WTC11 (cell line): ENCODE measurements at regions of chr7 and their contacts with region 1.

Region 1: DNA sequence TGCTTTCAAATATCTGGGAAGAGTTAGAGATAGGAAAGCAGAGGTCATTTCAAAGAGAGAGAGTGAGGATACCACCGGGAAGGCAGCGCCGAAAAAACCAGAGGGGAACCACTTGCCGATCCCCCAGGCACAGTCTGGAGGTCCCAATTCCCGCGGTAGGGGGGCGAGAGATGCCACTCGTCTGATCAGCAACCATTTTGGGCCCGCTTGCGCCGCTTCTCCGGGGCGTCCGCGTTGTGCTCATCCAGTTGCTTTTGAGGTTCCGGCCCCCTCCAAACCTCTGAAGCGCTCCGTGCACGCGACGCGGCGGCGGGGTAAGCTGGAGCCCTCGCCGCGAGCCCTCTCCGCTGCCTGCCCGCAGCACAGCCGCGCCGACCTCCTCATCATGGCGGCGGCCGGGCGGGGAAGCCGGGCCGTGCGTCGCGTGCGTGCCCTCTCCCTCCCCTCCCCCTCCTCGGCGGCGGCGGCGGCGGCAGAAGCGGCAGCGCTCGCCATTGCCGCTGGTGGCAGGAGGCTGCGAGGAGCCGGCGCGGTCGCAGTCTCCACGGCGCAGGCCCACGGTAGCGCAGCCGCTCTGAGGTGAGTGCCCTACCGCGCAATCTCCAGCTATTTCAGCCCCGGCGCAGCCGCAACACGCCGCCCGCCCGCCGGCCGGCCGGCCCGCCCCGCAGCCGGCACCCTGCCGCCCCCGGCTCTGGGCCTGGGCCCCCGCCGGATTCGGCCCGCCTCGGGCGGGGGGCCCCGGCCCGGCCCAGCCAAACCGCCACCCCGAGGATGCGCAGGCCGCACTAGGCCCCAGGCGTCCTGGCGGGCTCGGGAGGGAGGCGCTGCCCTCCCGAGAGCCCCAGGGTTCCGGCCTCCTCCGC is at the start of gene NRF1:
- DNase-seq: peak; percentile 84
- ATAC-seq: peak; percentile 72
- H3K4me3 Mint-ChIP-seq: peak within 1 kb of the TSS; percentile 94
- H3K27ac Mint-ChIP-seq: peak within 1 kb of the TSS; percentile 91
- H3K4me1 Mint-ChIP-seq: peaks cover 28% of the 10 kb centered on the region
- H3K27me3 Mint-ChIP-seq: no peaks in the 10 kb centered on the region
- CTCF ChIP-seq: no peak
- total RNA-seq, gene NRF1: 16.4 to 18.3 TPM (median 16.4 TPM) in 3 replicates

Region 2: GRCh38 chr7:129468087-129468486 is 143.4 kb before region 1 on chr7:
- CTCF ChIA-PET with region 1: interaction called, 12 read pairs
- POLR2A ChIA-PET with region 1: no interaction called
- DNase-seq: no peak
- ATAC-seq: no peak
- H3K4me3 Mint-ChIP-seq: no peak overlapping the region
- H3K27ac Mint-ChIP-seq: no peak overlapping the region
- H3K4me1 Mint-ChIP-seq: peaks cover 21% of the 10 kb centered on the region
- H3K27me3 Mint-ChIP-seq: no peaks in the 10 kb centered on the region
- CTCF ChIP-seq: no peak

Region 3: DNA sequence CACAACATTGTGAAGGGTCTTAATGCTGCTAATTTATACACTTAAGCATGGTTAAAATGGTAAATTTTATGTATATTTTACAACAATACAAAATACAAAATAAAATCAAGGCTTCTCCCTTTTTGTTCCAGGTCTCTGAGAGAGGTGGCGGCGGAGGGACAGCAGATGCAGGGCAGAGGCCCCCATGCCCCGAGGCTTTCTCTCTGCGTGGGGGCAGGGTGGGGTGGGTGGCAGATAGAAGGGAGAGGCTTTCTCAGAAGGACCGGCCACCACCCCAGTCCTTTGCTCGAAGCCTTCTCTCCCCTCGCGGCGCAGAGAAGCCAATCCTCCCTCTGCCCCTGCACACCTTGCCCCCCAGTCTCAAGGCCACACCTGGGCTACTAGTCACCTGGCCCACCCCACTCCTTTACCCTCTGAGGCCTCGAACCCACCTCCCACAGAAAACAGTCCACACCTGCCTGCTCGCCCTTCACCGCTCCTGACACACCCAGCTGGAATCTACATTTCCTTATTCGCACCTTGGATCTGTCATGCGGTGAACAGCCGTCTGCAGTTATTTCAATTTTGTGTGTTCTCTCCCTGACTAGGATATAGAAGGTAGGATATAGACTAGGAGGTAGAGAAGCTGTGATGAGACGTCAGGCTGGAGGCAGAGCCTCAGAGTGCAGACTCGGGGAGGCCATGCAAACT is 79.9 kb before region 1 on chr7:
- CTCF ChIA-PET with region 1: interaction called, 14 read pairs
- POLR2A ChIA-PET with region 1: no interaction called
- DNase-seq: no peak
- ATAC-seq: no peak
- H3K4me3 Mint-ChIP-seq: no peak overlapping the region
- H3K27ac Mint-ChIP-seq: no peak overlapping the region
- H3K4me1 Mint-ChIP-seq: peaks cover 20% of the 10 kb centered on the region
- H3K27me3 Mint-ChIP-seq: no peaks in the 10 kb centered on the region; the same call in 1 of the 2 replicates
- CTCF ChIP-seq: no peak

Region 4: GRCh38 chr7:129626896-129627295 is 15.4 kb after region 1 on chr7:
- CTCF ChIA-PET with region 1: interaction called, 10 read pairs
- POLR2A ChIA-PET with region 1: interaction called, 5 read pairs
- DNase-seq: no peak
- ATAC-seq: no peak
- H3K4me3 Mint-ChIP-seq: no peak overlapping the region
- H3K27ac Mint-ChIP-seq: no peak overlapping the region
- H3K4me1 Mint-ChIP-seq: peaks cover 33% of the 10 kb centered on the region
- H3K27me3 Mint-ChIP-seq: peaks cover 43% of the 10 kb centered on the region
- CTCF ChIP-seq: no peak

Region 5: GRCh38 chr7:129652914-129653313 is 41.4 kb after region 1 on chr7:
- CTCF ChIA-PET with region 1: no interaction called
- POLR2A ChIA-PET with region 1: no interaction called
- DNase-seq: no peak
- ATAC-seq: no peak
- H3K4me3 Mint-ChIP-seq: no peak overlapping the region
- H3K27ac Mint-ChIP-seq: no peak overlapping the region
- H3K4me1 Mint-ChIP-seq: peaks cover 31% of the 10 kb centered on the region
- H3K27me3 Mint-ChIP-seq: no peaks in the 10 kb centered on the region
- CTCF ChIP-seq: no peak

Region 6: GRCh38 chr7:129664029-129665012 is 52.8 kb after region 1 on chr7:
- CTCF ChIA-PET with region 1: no interaction called
- POLR2A ChIA-PET with region 1: no interaction called
- DNase-seq: no peak
- ATAC-seq: no peak
- H3K4me3 Mint-ChIP-seq: no peak overlapping the region
- H3K27ac Mint-ChIP-seq: peak overlapping the region; percentile 81; the same call in 1 of the 2 replicates
- H3K4me1 Mint-ChIP-seq: peaks cover 11% of the 10 kb centered on the region
- H3K27me3 Mint-ChIP-seq: no peaks in the 10 kb centered on the region
- CTCF ChIP-seq: no peak

Region 7: DNA sequence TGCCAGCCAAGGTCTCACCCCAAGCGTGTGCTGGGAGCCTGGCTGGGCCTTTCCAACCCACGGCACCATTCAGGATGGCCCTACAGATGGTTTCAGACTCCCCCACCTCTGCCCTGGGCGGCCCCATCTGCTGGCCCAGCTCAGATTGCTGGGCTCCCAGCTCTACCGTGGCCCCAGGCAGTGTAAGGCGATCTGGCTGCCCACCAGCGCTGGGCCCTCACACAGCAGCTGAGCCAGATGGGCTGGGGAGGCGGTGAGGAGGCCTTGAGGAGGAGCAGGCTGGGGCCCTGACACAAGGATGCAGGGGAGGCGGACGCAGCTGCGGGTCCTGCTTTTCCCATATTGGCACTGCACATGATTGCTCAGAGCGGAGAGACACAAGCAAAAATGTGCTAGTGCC is 162.9 kb after region 1 on chr7:
- CTCF ChIA-PET with region 1: interaction called, 12 read pairs
- POLR2A ChIA-PET with region 1: no interaction called
- DNase-seq: peak; percentile 48
- ATAC-seq: peak; percentile 5; the same call in 1 of the 2 replicates
- H3K4me3 Mint-ChIP-seq: peak overlapping the region; percentile 31
- H3K27ac Mint-ChIP-seq: no peak overlapping the region
- H3K4me1 Mint-ChIP-seq: peaks cover 79% of the 10 kb centered on the region
- H3K27me3 Mint-ChIP-seq: peaks cover 50% of the 10 kb centered on the region
- CTCF ChIP-seq: no peak